H1 (cell line): ENCODE measurements at regions of chr17 and their contacts with region 1.

Region 1: GRCh38 chr17:51508048-51508447 is 247.7 kb downstream of the UTP18 start:
- DNase-seq: no peak
- H3K4me3 ChIP-seq: no peak overlapping the region
- H3K27ac ChIP-seq: no peak overlapping the region
- H3K4me1 ChIP-seq: no peaks in the 10 kb centered on the region
- H3K27me3 ChIP-seq: no peaks in the 10 kb centered on the region
- CTCF ChIP-seq: no peak
- EP300 ChIP-seq: no peak
- POLR2A ChIP-seq: no peak
- RAD21 ChIP-seq: no peak

Region 2: GRCh38 chr17:51472670-51473205 is 35.3 kb before region 1 on chr17:
- CTCF ChIA-PET with region 1: no interaction called
- POLR2A ChIA-PET with region 1: no interaction called
- DNase-seq: no peak
- H3K4me3 ChIP-seq: no peak overlapping the region
- H3K27ac ChIP-seq: no peak overlapping the region
- H3K4me1 ChIP-seq: peaks cover 0 to 7% (median 1%) of the 10 kb centered on the region in 4 experiments; a peak in 3 of 7 replicates
- H3K27me3 ChIP-seq: no peaks in the 10 kb centered on the region
- CTCF ChIP-seq: no peak
- EP300 ChIP-seq: no peak
- POLR2A ChIP-seq: no peak
- RAD21 ChIP-seq: no peak

Region 3: GRCh38 chr17:51487947-51488346 is 20.1 kb before region 1 on chr17:
- CTCF ChIA-PET with region 1: interaction called, 21 read pairs
- POLR2A ChIA-PET with region 1: no interaction called
- DNase-seq: peak in 1 of 2 experiments; percentile 69
- H3K4me3 ChIP-seq: no peak overlapping the region
- H3K27ac ChIP-seq: no peak overlapping the region
- H3K4me1 ChIP-seq: no peaks in the 10 kb centered on the region
- H3K27me3 ChIP-seq: no peaks in the 10 kb centered on the region
- CTCF ChIP-seq: peak; percentile 57 to 86 (median 58)
- EP300 ChIP-seq: no peak
- POLR2A ChIP-seq: no peak
- RAD21 ChIP-seq: peak; percentile 37 to 54